HCT116 (cell line): ENCODE measurements at regions of chr2 and their contacts with region 1.

Region 1: DNA sequence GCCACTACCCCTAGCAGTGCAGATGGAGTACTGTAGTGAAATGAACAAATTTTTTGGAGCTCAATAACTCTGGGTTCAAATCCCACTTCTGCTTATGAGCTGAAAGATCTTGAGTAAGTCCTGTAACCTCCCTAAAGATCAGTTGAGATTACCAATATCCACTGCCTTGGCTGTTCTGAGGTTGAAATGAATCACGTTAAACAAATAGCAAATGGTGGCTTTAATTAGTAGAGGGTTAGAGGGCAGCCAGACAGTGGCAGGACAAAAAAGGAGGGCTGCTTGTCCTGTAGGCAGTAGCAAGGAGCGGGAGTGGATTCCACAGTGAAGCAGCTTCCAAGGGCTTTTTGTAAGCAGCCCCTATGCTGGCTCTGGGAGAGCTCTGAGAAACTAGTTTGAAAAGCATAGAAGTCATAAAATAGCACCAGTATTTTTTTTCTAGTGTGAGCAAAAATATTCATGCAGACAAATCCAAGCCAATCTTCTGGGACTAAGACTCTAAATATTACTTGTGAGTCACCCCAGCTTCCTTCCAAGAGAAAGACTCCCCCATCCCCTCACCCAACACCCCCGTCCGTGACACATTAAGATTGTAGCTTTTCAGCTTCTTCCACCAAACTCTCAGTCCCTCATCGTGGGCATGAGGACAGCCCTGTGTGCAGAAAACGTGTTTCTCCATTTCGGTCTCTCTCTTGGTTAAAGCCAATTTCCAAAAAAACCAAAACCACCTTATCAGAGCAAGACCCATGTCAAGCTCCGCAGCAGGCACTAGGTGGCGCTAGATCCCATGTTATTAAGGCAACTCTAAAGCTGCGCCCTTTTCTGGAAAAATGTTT is 123.5 kb upstream of the LGALSL start:
- DNase-seq: peak; percentile 73
- ATAC-seq: peak; percentile 90
- H3K4me3 ChIP-seq: no peak overlapping the region; a peak in 1 of 4 replicates
- H3K27ac ChIP-seq: no peak overlapping the region
- H3K4me1 ChIP-seq: peaks cover 0 to 7% of the 10 kb centered on the region in 2 experiments; a peak in 2 of 4 replicates
- H3K27me3 ChIP-seq: no peaks in the 10 kb centered on the region
- CTCF ChIP-seq: peak; percentile 86 to 95 (median 94)
- POLR2A ChIP-seq: no peak
- RAD21 ChIP-seq: peak; percentile 99

Region 2: DNA sequence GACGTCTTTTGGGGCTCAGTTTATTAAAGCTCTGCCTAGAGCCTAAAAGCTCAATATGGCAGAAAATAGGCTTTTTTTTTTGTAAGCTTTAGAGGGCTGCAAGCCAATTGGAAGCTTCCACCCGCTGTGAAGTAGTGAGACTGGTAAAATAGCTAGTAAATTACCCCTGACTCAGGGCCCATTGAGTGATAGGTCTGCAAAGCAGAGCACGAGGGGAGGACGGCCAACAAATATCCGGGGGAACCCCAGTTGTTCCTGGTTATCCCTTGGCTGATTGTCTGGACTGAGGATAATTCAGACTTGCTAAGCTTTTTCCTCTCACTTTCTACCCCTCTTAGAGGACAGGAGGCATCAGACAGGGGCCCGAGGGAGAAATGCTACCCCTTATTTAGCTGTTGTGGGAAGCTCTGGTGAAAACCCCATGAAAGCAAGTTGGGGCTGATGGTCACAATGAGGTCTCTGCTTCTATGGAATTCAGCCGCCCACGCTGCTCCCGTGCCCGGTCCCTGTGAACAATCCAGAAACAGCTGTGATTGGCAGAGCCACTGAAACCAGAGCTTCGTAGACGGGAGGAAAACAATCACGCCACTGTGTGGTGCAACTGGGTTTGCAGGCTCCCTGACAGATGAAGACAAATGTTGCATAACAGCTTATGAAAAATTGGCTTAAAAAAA is 18.4 kb before region 1 on chr2:
- CTCF ChIA-PET with region 1: interaction called, 12 read pairs
- POLR2A ChIA-PET with region 1: no interaction called
- RAD21 ChIA-PET with region 1: interaction called in 1 of 2 experiments, 4 read pairs
- intact Hi-C with region 1: no loop called
- DNase-seq: peak; percentile 71
- ATAC-seq: peak; percentile 97
- H3K4me3 ChIP-seq: peak overlapping the region in 1 of 2 experiments; percentile 6; a peak in 1 of 4 replicates
- H3K27ac ChIP-seq: no peak overlapping the region
- H3K4me1 ChIP-seq: peaks cover 11 to 13% of the 10 kb centered on the region in 2 experiments
- H3K27me3 ChIP-seq: no peaks in the 10 kb centered on the region
- CTCF ChIP-seq: peak; percentile 46 to 52 (median 52); a peak in 5 of 6 replicates
- POLR2A ChIP-seq: no peak
- RAD21 ChIP-seq: peak; percentile 78

Region 3: DNA sequence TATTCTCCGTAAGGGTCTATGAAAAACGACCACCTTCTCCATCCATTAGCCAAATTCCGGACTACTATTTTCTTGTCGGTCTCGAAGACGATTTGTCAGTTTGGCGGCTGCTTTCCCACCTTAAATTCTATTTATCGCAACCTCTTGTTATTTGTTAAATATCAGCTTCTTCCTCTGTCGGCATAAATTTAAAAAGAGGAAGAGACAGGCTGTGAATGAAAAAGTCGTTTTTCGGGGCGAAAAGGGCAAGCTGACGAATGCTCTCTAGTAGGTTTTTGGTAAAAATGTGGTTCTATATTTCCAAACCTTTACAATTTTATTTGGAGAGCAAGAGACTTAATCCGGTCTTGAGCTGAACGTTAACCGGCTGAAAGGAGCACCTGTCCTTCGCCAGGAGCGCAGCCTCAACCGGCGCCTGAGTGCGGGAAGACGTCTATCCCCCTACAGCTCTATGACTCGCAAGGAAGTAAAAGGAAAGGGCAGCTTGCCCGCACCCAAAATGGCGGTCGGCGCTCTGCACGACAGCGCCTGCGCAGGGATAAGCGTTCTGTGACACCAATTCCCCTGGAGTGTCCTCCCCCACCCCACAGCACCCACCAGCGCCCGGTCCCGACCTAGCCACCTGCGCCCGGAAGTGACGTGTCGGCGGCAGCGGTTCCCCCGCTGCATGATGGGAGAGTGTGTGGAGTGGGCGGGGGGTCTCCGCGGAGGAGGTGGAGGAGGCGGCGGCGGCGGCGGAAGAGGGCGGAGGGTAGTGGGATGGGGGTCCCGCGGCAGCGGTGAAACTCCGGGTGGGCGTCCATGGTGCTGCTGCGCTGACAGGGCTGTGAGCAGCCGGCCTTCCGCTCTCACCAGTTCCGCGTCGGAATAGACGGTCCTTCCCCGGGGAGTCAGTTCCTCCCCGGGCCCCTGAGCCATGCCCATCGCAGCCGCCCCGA is 193.4 kb after region 1 on chr2 and contains the start of gene AFTPH:
- CTCF ChIA-PET with region 1: interaction called, 25 read pairs
- POLR2A ChIA-PET with region 1: interaction called, 3 read pairs
- RAD21 ChIA-PET with region 1: no interaction called
- intact Hi-C with region 1: loop called (anchors 1 kb)
- DNase-seq: peak; percentile 96
- ATAC-seq: peak; percentile 95
- H3K4me3 ChIP-seq: peak within 1 kb of the TSS; percentile 70 to 91
- H3K27ac ChIP-seq: peak within 1 kb of the TSS; percentile 78
- H3K4me1 ChIP-seq: peaks cover 6 to 20% of the 10 kb centered on the region in 2 experiments; a peak in 3 of 4 replicates
- H3K27me3 ChIP-seq: no peaks in the 10 kb centered on the region
- CTCF ChIP-seq: no peak
- POLR2A ChIP-seq: peak; percentile 75
- RAD21 ChIP-seq: no peak
- total RNA-seq, gene AFTPH: 23.6 TPM

Region 4: DNA sequence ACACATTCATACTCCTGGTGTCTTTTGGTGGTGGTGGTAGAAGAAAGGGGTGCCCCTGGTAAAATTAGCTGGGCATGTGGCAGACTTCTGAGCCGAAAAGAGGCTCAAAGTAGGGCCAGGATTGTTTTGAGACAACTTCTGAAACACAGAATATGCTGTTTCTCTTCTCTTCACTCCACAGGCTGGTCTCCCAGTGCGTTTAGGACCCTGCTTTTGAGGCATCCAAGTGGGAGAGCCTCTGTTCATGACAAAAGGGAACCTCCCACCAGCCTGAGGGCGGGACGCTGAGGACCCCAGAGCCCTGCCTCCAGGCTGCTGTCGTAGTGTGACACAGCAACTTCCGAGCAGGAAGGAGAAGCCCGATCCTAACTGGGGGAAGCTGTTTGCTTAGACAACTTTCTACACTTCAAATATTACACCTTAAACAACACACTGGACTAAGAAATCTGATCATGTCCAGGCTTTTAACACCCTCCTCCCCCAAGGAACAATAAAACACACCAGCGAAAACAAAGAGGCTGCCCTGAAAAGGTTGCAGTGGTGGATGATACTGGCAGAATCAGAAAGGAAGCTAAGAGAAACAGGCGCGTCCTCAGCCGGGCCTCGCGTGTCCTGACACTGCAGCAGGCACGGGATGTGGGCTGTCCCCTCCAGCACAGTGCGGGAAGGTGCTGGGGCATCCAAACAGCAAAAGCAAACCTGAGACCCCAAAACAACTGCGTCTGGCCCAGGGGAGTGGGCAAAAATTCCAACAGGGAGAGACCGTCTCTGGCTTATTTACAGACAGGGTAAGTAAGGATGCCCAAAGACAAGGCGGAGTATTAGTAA is 313.9 kb after region 1 on chr2:
- CTCF ChIA-PET with region 1: interaction called, 4 read pairs
- POLR2A ChIA-PET with region 1: no interaction called
- RAD21 ChIA-PET with region 1: no interaction called
- intact Hi-C with region 1: loop called (anchors 5 kb)
- DNase-seq: peak; percentile 59
- ATAC-seq: peak; percentile 77
- H3K4me3 ChIP-seq: peak overlapping the region; percentile 46 to 57
- H3K27ac ChIP-seq: peak overlapping the region; percentile 95
- H3K4me1 ChIP-seq: peaks cover 74 to 100% of the 10 kb centered on the region in 2 experiments
- H3K27me3 ChIP-seq: no peaks in the 10 kb centered on the region
- CTCF ChIP-seq: no peak
- POLR2A ChIP-seq: peak; percentile 47
- RAD21 ChIP-seq: no peak

Region 5: DNA sequence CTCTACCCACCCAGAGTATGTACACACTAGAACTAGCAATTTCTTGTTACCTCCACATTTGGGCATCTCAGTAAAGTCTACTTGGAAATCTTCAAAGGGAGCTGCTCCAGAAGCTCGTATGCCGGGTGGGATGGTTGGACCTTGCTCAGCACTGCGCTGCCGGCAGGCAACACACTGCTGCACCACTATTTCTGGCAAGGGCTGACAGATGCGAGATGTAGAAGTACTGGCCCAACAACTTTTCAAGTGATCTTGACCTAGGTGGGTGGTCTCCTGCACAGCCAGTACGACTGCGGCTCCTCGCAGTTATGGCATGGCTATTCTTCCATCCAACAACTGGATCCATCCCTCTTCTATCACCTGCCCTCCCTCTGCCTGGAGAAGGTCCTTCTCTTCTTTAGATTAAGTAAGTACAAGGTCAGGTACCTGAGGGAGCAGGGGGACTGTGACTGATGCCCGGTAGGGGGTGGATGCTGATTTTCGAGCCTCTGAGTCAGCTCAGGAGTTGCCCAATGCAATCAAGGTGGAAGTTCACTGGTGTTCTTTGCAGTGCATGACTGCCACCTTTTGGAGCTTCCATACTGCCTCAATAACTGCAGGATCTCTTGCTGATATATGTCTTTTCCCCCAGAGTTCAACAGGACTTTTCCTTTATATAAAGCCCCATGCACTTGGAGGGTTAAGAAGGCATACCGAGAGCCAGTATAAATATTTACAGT is 558.3 kb after region 1 on chr2:
- CTCF ChIA-PET with region 1: interaction called, 16 read pairs
- POLR2A ChIA-PET with region 1: no interaction called
- RAD21 ChIA-PET with region 1: interaction called in 1 of 2 experiments, 4 read pairs
- intact Hi-C with region 1: no loop called
- DNase-seq: peak; percentile 68
- ATAC-seq: peak; percentile 93
- H3K4me3 ChIP-seq: no peak overlapping the region
- H3K27ac ChIP-seq: no peak overlapping the region
- H3K4me1 ChIP-seq: peaks cover 0 to 6% of the 10 kb centered on the region in 2 experiments; a peak in 1 of 4 replicates
- H3K27me3 ChIP-seq: no peaks in the 10 kb centered on the region
- CTCF ChIP-seq: peak; percentile 51 to 64 (median 54); a peak in 4 of 6 replicates
- POLR2A ChIP-seq: no peak
- RAD21 ChIP-seq: peak; percentile 87

Region 6: GRCh38 chr2:65576861-65577601 is 1246.5 kb after region 1 on chr2:
- CTCF ChIA-PET with region 1: no interaction called
- POLR2A ChIA-PET with region 1: no interaction called
- RAD21 ChIA-PET with region 1: no interaction called
- intact Hi-C with region 1: loop called (anchors 10 kb)
- DNase-seq: peak; percentile 90
- ATAC-seq: peak; percentile 83
- H3K4me3 ChIP-seq: peak overlapping the region; percentile 12 to 31; a peak in 3 of 4 replicates
- H3K27ac ChIP-seq: peak overlapping the region; percentile 76
- H3K4me1 ChIP-seq: peaks cover 27 to 69% of the 10 kb centered on the region in 2 experiments
- H3K27me3 ChIP-seq: no peaks in the 10 kb centered on the region
- CTCF ChIP-seq: no peak
- POLR2A ChIP-seq: no peak
- RAD21 ChIP-seq: no peak